Activated CD4-positive, alpha-beta T cell treated with anti-CD3 and anti-CD28 coated beads for 36 hours (primary cell): ENCODE measurements at regions of chr6 and their contacts with region 1.

Region 1: DNA sequence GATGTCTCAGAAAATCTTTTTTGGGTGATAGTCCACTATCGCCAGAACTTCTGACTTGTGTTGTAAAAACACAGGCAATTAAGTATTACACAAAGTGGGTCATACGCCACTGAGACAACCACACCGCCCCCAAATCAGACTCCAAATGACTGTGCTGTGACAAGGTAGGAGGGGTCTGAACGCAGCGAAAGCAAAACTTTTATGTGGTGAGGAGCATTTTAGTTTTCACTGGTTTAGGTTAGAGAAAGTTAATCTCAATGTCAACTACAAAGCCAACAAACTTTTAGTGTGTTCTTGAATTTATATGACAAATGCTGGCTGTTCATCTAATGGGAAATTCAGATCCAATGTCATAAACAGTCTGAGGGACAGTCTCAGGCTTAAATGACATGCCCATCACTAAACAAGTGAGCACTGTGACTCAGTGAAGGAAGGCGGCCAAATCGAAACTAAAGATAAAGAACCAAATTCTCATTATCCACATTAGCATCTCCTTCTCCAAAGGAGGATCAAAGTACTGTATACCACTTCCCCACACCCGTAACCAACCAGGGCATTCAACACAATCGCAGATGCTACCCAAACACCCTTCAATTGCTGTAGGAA is 186.7 kb downstream of the GJA10 start:
- DNase-seq: peak; percentile 92
- ATAC-seq: peak; percentile 62
- H3K4me3 Mint-ChIP-seq: peak overlapping the region; percentile 93
- H3K27ac Mint-ChIP-seq: peak overlapping the region; percentile 99
- H3K4me1 Mint-ChIP-seq: peaks cover 83% of the 10 kb centered on the region
- H3K27me3 Mint-ChIP-seq: no peaks in the 10 kb centered on the region

Region 2: GRCh38 chr6:89412071-89413005 is 668.6 kb before region 1 on chr6 and contains the start of gene RRAGD:
- CTCF ChIA-PET with region 1: no interaction called
- POLR2A ChIA-PET with region 1: no interaction called
- intact Hi-C with region 1: loop called in 1 of 2 experiments (anchors 5 kb)
- DNase-seq: peak; percentile 83
- ATAC-seq: peak; percentile 80
- H3K4me3 Mint-ChIP-seq: peak within 1 kb of the TSS; percentile 83
- H3K27ac Mint-ChIP-seq: peak within 1 kb of the TSS; percentile 85
- H3K4me1 Mint-ChIP-seq: peaks cover 20% of the 10 kb centered on the region
- H3K27me3 Mint-ChIP-seq: peaks cover 3% of the 10 kb centered on the region
- total RNA-seq, gene RRAGD: 19.6 to 20.1 TPM

Region 3: GRCh38 chr6:89805814-89806371 is 275.1 kb before region 1 on chr6:
- CTCF ChIA-PET with region 1: no interaction called
- POLR2A ChIA-PET with region 1: no interaction called
- intact Hi-C with region 1: no loop called
- DNase-seq: no peak
- ATAC-seq: no peak
- H3K4me3 Mint-ChIP-seq: no peak overlapping the region
- H3K27ac Mint-ChIP-seq: no peak overlapping the region
- H3K4me1 Mint-ChIP-seq: peaks cover 14% of the 10 kb centered on the region
- H3K27me3 Mint-ChIP-seq: no peaks in the 10 kb centered on the region

Region 4: DNA sequence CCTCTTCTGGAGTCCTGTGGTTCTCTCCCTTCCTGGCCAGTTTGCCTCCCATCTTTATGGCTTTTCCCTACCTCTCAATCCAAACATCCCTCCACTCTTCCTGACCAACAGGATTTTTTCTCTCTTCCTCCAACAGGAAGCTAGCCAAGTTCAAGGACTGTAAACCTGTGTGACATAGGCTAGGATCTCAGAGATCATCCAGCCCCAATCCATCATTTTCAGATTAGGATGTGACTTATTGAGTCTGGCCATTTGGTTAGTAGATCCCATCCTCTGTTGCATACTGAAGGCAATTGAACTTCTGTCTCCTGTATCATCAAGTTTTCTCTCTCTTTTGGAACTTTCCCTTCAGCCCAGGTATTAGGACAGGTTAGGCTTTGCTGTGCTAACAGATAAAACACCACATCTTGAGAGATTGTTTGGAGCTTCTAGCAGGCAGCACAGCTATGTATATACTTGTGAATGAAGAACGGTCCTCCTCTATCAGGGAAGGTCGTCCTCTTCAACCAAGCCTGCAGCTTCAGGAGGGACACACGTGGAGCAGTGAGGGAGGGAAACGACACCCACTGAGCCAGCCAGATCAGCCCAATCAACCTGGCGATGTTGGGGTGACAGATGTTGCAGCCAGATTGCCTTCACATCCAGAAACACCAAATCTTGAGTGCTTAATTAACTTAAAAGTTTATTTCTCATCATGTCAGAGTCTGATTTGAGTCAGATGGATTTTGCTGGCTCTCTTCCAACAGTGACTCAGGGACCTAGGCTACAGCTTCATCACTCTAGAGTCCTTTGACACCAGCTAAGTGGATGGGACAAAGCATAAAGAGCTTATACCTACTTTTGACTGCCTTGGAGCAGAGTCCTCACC is 79.9 kb before region 1 on chr6:
- CTCF ChIA-PET with region 1: interaction called, 5 read pairs
- POLR2A ChIA-PET with region 1: interaction called, 3 read pairs
- intact Hi-C with region 1: loop called (anchors 2 kb)
- DNase-seq: peak; percentile 80
- ATAC-seq: peak; percentile 79
- H3K4me3 Mint-ChIP-seq: no peak overlapping the region
- H3K27ac Mint-ChIP-seq: no peak overlapping the region
- H3K4me1 Mint-ChIP-seq: peaks cover 35% of the 10 kb centered on the region
- H3K27me3 Mint-ChIP-seq: no peaks in the 10 kb centered on the region

Region 5: GRCh38 chr6:90068264-90068663 is 12.7 kb before region 1 on chr6:
- CTCF ChIA-PET with region 1: no interaction called
- POLR2A ChIA-PET with region 1: interaction called, 8 read pairs
- intact Hi-C with region 1: loop called in 1 of 2 experiments (anchors 1 kb)
- DNase-seq: peak; percentile 71
- ATAC-seq: peak; percentile 73
- H3K4me3 Mint-ChIP-seq: no peak overlapping the region
- H3K27ac Mint-ChIP-seq: peak overlapping the region; percentile 64
- H3K4me1 Mint-ChIP-seq: peaks cover 87% of the 10 kb centered on the region
- H3K27me3 Mint-ChIP-seq: no peaks in the 10 kb centered on the region

Region 6: DNA sequence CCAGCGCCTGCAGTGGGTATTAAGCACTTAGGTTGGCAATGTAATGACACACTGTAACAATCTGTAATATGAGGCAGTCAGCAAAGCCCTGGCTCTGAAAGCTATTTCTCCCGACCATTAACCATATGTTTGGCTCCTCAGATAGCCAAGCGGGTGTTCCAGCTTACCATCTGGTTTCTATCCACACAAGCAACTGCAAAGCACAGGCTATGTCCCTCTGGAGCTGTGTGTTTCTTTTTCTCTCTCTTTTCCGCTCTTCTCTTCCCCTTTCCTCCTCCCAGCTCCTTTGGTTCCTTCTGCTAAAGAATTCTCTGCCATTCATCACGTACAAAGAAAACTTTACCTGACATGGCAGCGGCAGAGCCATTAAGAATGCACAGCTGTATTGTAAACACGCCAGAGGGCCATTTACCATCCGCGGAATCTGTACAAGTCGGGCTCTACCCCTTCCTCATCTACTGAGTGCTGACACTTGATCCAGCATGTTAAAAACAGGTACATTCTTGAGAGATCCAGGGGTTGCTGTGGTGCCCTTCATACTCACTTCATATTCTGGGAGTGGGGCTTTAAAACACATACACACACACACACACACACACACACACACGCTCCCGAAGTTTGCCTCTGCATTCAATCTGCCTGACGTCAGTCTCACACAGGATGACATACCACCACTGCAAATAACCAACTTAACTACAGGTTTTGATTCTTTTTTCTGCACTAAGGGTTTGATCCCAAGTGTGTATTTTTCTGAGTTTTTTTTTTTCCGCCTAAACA is 138.4 kb after region 1 on chr6:
- CTCF ChIA-PET with region 1: no interaction called
- POLR2A ChIA-PET with region 1: interaction called, 7 read pairs
- intact Hi-C with region 1: loop called (anchors 1 kb)
- DNase-seq: peak; percentile 50
- ATAC-seq: no peak
- H3K4me3 Mint-ChIP-seq: no peak overlapping the region
- H3K27ac Mint-ChIP-seq: no peak overlapping the region
- H3K4me1 Mint-ChIP-seq: peaks cover 20% of the 10 kb centered on the region
- H3K27me3 Mint-ChIP-seq: no peaks in the 10 kb centered on the region

Region 7: DNA sequence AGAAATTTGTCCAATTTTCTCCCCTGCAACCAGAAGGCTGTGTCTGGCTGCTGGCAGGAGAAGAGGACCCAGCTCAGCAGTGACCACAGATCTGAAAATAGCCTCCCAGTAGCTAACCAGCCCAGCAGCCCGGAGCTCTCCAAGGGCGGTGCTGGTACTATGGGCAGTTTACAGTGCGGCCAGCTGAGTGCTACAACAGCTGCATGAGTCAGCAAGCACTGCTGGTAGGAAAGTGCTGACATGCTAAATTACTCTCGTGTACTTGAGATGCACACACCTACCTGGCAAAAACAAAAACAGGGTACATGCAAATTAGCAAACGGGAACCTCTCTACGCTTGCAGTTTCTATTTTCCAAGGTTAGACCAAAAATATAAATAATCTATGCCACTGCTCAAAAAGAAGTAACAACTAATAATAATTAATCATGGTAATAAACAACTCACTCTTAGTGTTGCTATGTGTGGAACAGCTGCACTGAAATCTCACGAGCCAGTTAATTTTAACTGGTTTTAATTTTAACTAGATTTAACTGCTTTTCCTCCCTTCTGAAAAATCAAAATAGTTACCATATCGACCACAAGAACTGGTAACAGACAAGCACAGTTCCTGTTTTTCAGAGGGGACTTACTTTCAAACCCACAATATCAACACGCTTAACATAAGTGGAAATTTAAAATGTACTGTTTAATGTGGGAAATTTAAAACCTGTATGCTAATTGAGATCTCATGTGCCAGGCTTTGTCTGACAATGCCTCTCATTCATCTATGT is 204.8 kb after region 1 on chr6:
- CTCF ChIA-PET with region 1: interaction called, 3 read pairs
- POLR2A ChIA-PET with region 1: interaction called, 4 read pairs
- intact Hi-C with region 1: loop called (anchors 1 kb)
- DNase-seq: peak; percentile 75
- ATAC-seq: peak; percentile 40
- H3K4me3 Mint-ChIP-seq: peak overlapping the region; percentile 62
- H3K27ac Mint-ChIP-seq: peak overlapping the region; percentile 95
- H3K4me1 Mint-ChIP-seq: peaks cover 93% of the 10 kb centered on the region
- H3K27me3 Mint-ChIP-seq: no peaks in the 10 kb centered on the region

Region 8: GRCh38 chr6:90466154-90466940 is 385.4 kb after region 1 on chr6:
- CTCF ChIA-PET with region 1: no interaction called
- POLR2A ChIA-PET with region 1: no interaction called
- intact Hi-C with region 1: loop called in 1 of 2 experiments (anchors 2 kb)
- DNase-seq: peak; percentile 68
- ATAC-seq: peak; percentile 74
- H3K4me3 Mint-ChIP-seq: peak overlapping the region; percentile 48
- H3K27ac Mint-ChIP-seq: peak overlapping the region; percentile 93
- H3K4me1 Mint-ChIP-seq: peaks cover 97% of the 10 kb centered on the region
- H3K27me3 Mint-ChIP-seq: peaks cover 2% of the 10 kb centered on the region

Region 9: DNA sequence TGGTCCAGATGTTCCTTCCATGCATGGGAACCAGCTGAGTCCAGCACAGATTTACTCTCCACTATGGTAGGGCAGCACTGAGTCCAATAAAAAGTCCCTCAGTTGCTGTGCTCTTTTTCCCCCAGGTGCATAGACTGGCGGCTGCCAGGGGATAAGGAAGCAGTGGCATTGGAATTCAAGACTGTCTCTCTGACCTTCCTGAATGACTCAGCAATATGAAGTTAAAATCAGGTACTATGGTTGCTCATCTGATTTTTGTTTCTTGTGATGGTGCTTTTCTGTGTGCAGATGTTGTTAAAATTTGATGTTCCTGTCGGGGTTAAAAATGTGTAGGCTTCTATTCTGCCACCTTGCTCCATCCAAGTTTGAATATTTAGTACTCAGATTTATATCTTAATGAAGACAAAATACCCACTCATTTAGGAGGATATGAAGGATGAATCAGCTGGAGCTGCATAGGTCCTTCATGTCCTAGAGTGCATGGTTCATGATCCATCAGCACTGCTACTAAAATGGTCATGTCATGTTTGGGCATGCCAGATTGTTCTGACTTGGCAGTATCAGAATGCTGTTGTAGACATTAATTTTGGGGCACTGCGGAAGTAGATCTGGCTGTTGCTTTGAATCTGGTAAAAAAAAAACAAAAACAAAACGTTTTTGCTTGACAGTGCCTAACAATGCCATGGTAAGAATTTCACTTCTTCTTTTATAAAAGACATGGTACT is 827.1 kb after region 1 on chr6:
- CTCF ChIA-PET with region 1: no interaction called
- POLR2A ChIA-PET with region 1: no interaction called
- intact Hi-C with region 1: no loop called
- DNase-seq: no peak
- ATAC-seq: no peak
- H3K4me3 Mint-ChIP-seq: no peak overlapping the region
- H3K27ac Mint-ChIP-seq: no peak overlapping the region
- H3K4me1 Mint-ChIP-seq: no peaks in the 10 kb centered on the region
- H3K27me3 Mint-ChIP-seq: peaks cover 5% of the 10 kb centered on the region